ENCODE measurements at regions of chr10 and their contacts with region 1.

Region 1: GRCh38 chr10:12103802-12104201 is 25.7 kb upstream of the SEC61A2 start:
- DNase-seq: no peak
- ATAC-seq: no peak
- H3K4me3 ChIP-seq: no peak overlapping the region
- H3K27ac ChIP-seq: no peak overlapping the region
- H3K4me1 ChIP-seq: no peaks in the 10 kb centered on the region
- H3K27me3 ChIP-seq: no peaks in the 10 kb centered on the region
- CTCF ChIP-seq: no peak
- POLR2A ChIP-seq: no peak
- RAD21 ChIP-seq: no peak

Region 2: GRCh38 chr10:12121673-12122072 is 17.9 kb after region 1 on chr10:
- CTCF ChIA-PET with region 1: interaction called, 5 read pairs
- POLR2A ChIA-PET with region 1: no interaction called
- dilution Hi-C with region 1: no loop called
- in situ Hi-C with region 1: no loop called
- intact Hi-C with region 1: loop called (anchors 2 kb)
- DNase-seq: no peak
- ATAC-seq: no peak
- H3K4me3 ChIP-seq: no peak overlapping the region
- H3K27ac ChIP-seq: no peak overlapping the region
- H3K4me1 ChIP-seq: no peaks in the 10 kb centered on the region
- H3K27me3 ChIP-seq: no peaks in the 10 kb centered on the region
- CTCF ChIP-seq: no peak
- POLR2A ChIP-seq: no peak
- RAD21 ChIP-seq: no peak

Measured in IMR-90 (cell line).